A549 (cell line): ENCODE measurements at regions of chr4 and their contacts with region 1.

Region 1: DNA sequence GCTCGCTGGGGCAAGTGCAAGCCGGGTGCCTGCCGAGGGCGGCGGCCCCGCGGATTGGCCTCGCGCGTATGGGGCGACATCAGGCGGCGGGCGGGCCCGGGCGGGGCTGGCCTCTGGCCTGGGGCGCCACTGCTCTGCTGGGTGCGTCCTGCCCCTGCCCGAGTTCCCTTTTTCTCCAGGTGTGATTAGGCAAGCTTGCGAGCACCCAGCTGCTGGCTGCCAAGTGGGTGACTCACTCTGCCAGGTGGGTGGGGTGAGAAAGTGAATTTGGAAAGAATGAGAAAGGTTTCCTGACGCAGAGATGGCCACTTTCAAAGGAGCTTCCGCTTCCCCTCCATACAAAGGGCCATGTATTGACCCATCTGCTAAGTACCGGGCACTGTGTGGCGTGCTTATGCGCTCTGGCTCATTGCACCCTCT is 32.5 kb downstream of the FGFBP1 start:
- DNase-seq: peak; percentile 85 to 90
- ATAC-seq: peak; percentile 96 to 97
- H3K4me3 ChIP-seq: peak overlapping the region; percentile 30
- H3K27ac ChIP-seq: peak overlapping the region; percentile 75 to 87
- H3K4me1 ChIP-seq: peaks cover 17% of the 10 kb centered on the region; the same call in 2 of the 3 replicates
- CTCF ChIP-seq: no peak
- EP300 ChIP-seq: peak; percentile 44 to 50; a peak in 2 of 5 replicates
- POLR2A ChIP-seq: no peak
- RAD21 ChIP-seq: peak in 1 of 2 experiments; percentile 44; a peak in 2 of 5 replicates

Region 2: DNA sequence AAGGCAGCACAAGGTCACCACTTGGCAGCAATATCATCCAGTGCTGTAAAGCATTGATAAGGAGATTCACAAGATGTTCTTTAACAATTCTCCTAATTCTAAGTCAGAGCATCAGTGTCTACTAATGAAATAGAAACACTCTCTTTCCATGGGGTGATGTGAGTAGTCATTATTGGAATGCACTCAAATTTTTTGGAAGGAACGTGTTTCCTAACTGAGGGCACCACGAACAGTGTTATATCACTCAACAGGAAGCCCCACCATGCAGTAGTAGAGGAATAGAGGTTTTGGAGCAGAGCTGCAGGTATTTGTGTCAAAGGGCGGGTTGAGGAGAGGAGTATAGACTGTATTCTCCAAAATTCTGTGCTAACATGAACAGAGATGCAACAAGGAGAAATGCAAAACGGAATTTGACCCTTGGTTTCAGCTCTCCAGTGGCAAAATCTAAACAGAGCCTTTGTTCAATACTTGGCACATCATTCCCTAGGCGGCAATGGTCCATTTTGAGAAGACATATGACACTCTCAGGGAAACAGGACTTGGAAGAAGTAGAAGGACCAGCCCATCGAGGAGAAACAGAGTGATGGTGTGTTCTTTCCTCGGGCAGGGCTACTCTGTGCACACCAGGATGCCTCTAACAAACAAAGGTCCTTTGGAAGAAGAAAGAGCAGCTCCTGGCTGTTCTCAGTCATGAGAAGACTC is 804.9 kb before region 1 on chr4:
- CTCF ChIA-PET with region 1: no interaction called
- POLR2A ChIA-PET with region 1: no interaction called
- DNase-seq: no peak
- ATAC-seq: no peak
- H3K4me3 ChIP-seq: no peak overlapping the region
- H3K27ac ChIP-seq: no peak overlapping the region
- H3K4me1 ChIP-seq: no peaks in the 10 kb centered on the region
- CTCF ChIP-seq: no peak
- EP300 ChIP-seq: no peak
- POLR2A ChIP-seq: no peak
- RAD21 ChIP-seq: no peak

Region 3: DNA sequence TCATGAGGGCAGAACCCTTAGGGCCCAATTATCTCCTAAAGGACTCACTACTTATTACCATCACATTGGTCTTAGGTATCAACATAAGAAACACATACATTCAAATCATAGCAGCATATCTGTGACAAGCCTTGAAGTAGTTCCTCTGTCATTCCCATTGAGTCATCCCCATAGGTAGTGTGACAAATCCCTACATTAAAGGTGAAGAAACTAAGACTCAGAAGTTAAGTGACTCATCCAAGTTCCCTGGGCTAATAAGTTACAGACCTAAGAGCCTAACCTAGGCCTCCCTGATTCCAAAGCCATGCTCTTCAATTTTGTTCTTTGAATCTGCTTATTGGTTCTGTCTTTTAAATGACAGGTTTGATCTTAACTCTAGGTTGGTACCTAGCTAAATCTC is 69.7 kb before region 1 on chr4:
- CTCF ChIA-PET with region 1: no interaction called
- POLR2A ChIA-PET with region 1: no interaction called
- DNase-seq: peak; percentile 37 to 44
- ATAC-seq: peak; percentile 73 to 76
- H3K4me3 ChIP-seq: no peak overlapping the region
- H3K27ac ChIP-seq: peak overlapping the region in 1 of 2 experiments; percentile 45; a peak in 1 of 6 replicates
- H3K4me1 ChIP-seq: peaks cover 11% of the 10 kb centered on the region
- CTCF ChIP-seq: no peak
- EP300 ChIP-seq: no peak
- POLR2A ChIP-seq: no peak
- RAD21 ChIP-seq: no peak

Region 4: GRCh38 chr4:15893962-15894361 is 12.1 kb before region 1 on chr4:
- CTCF ChIA-PET with region 1: interaction called, 12 read pairs
- POLR2A ChIA-PET with region 1: interaction called, 3 read pairs
- DNase-seq: peak; percentile 82 to 95
- ATAC-seq: peak; percentile 97 to 100
- H3K4me3 ChIP-seq: no peak overlapping the region
- H3K27ac ChIP-seq: peak overlapping the region; percentile 77 to 86
- H3K4me1 ChIP-seq: peaks cover 40% of the 10 kb centered on the region
- CTCF ChIP-seq: no peak
- EP300 ChIP-seq: no peak
- POLR2A ChIP-seq: no peak
- RAD21 ChIP-seq: no peak

Region 5: GRCh38 chr4:15920723-15921591 is 14.9 kb after region 1 on chr4:
- CTCF ChIA-PET with region 1: interaction called, 5 read pairs
- POLR2A ChIA-PET with region 1: interaction called, 11 read pairs
- DNase-seq: peak; percentile 63 to 90
- ATAC-seq: peak; percentile 97 to 99
- H3K4me3 ChIP-seq: no peak overlapping the region
- H3K27ac ChIP-seq: peak overlapping the region; percentile 87
- H3K4me1 ChIP-seq: peaks cover 39% of the 10 kb centered on the region
- CTCF ChIP-seq: no peak
- EP300 ChIP-seq: peak in 1 of 2 experiments; percentile 27; a peak in 1 of 5 replicates
- POLR2A ChIP-seq: no peak
- RAD21 ChIP-seq: peak in 1 of 2 experiments; percentile 16; a peak in 1 of 5 replicates